ENCODE measurements at regions of chr6 and their contacts with region 1.

Region 1: GRCh38 chr6:24494821-24495795 is at the start of gene ALDH5A1:
- DNase-seq: peak; percentile 65
- H3K4me3 Mint-ChIP-seq: peak within 1 kb of the TSS; percentile 87
- H3K27ac Mint-ChIP-seq: peak within 1 kb of the TSS; percentile 19
- H3K4me1 Mint-ChIP-seq: peaks cover 21% of the 10 kb centered on the region
- H3K27me3 Mint-ChIP-seq: peaks cover 2% of the 10 kb centered on the region
- total RNA-seq, gene ALDH5A1: 11.3 and 11.9 TPM in 2 replicates

Region 2: GRCh38 chr6:23591761-23592160 is 903.3 kb before region 1 on chr6:
- intact Hi-C with region 1: no loop called
- DNase-seq: no peak
- H3K4me3 Mint-ChIP-seq: no peak overlapping the region
- H3K27ac Mint-ChIP-seq: no peak overlapping the region
- H3K4me1 Mint-ChIP-seq: no peaks in the 10 kb centered on the region
- H3K27me3 Mint-ChIP-seq: no peaks in the 10 kb centered on the region

Region 3: DNA sequence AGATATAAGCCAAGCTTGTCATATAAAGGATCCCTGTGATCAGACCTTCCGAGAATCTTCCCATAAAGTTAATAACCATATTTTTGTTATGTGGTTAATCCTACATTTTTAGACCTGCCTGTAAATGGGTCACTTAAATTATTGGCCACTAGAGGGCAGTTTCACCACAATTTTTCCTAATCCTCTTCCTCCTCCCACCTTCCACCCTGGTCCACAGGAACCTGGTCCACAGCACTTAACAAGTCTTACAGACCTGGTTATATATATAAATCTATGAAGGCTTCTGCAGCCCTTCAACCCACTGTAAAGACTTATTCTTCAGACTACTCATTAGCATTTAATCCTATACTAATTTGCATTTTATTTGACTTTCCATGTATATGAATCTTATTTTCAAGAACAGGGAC is 64.1 kb before region 1 on chr6:
- intact Hi-C with region 1: loop called (anchors 5 kb)
- DNase-seq: no peak
- H3K4me3 Mint-ChIP-seq: no peak overlapping the region
- H3K27ac Mint-ChIP-seq: no peak overlapping the region
- H3K4me1 Mint-ChIP-seq: no peaks in the 10 kb centered on the region
- H3K27me3 Mint-ChIP-seq: no peaks in the 10 kb centered on the region

Region 4: GRCh38 chr6:24460966-24461365 is 34.1 kb before region 1 on chr6:
- intact Hi-C with region 1: no loop called
- DNase-seq: no peak
- H3K4me3 Mint-ChIP-seq: no peak overlapping the region
- H3K27ac Mint-ChIP-seq: no peak overlapping the region
- H3K4me1 Mint-ChIP-seq: no peaks in the 10 kb centered on the region
- H3K27me3 Mint-ChIP-seq: peaks cover 3% of the 10 kb centered on the region

Region 5: DNA sequence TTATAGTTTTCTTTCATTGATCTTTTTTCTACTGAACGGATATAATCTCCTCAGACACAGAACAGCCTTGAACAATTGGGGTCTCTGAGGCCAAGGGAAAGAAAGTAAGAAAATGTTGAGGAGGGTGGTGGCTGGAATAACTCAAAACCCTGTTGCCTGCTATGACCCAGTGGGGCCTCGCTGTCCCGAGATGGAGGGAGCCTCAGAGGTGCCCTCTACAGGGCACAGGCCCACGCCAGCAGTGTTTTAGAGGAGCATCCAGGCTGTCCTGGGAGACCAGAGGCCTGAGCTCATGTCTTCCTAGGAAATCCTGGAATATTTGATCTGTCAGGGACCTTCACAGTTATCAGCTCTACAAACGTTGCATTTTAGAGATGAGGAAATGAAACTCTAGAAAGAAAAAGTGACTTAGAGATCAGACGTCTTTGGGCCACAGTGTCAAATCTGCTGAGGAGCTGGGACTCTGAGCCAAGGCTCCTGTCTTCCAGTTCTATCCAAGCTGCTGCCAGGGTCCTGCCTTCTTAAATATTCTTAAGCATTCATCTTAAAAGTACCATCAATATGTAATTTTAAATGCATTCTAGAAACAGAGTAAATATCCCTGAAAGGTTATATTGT is 25.9 kb after region 1 on chr6:
- intact Hi-C with region 1: loop called (anchors 2 kb)
- DNase-seq: no peak
- H3K4me3 Mint-ChIP-seq: no peak overlapping the region
- H3K27ac Mint-ChIP-seq: no peak overlapping the region
- H3K4me1 Mint-ChIP-seq: peaks cover 20% of the 10 kb centered on the region
- H3K27me3 Mint-ChIP-seq: no peaks in the 10 kb centered on the region

Region 6: GRCh38 chr6:24666641-24667377 is 171.7 kb after region 1 on chr6 and contains the starts of genes ACOT13 and TDP2:
- intact Hi-C with region 1: loop called (anchors 2 kb)
- DNase-seq: peak; percentile 97
- H3K4me3 Mint-ChIP-seq: peak within 1 kb of the TSS; percentile 92
- H3K27ac Mint-ChIP-seq: peak within 1 kb of the TSS; percentile 99
- H3K4me1 Mint-ChIP-seq: peaks cover 61% of the 10 kb centered on the region
- H3K27me3 Mint-ChIP-seq: no peaks in the 10 kb centered on the region
- total RNA-seq, gene ACOT13: 27.0 and 27.4 TPM in 2 replicates
- total RNA-seq, gene TDP2: 46.1 and 47.4 TPM in 2 replicates